A549 (cell line): ENCODE measurements at regions of chr1 and their contacts with region 1.

Region 1: DNA sequence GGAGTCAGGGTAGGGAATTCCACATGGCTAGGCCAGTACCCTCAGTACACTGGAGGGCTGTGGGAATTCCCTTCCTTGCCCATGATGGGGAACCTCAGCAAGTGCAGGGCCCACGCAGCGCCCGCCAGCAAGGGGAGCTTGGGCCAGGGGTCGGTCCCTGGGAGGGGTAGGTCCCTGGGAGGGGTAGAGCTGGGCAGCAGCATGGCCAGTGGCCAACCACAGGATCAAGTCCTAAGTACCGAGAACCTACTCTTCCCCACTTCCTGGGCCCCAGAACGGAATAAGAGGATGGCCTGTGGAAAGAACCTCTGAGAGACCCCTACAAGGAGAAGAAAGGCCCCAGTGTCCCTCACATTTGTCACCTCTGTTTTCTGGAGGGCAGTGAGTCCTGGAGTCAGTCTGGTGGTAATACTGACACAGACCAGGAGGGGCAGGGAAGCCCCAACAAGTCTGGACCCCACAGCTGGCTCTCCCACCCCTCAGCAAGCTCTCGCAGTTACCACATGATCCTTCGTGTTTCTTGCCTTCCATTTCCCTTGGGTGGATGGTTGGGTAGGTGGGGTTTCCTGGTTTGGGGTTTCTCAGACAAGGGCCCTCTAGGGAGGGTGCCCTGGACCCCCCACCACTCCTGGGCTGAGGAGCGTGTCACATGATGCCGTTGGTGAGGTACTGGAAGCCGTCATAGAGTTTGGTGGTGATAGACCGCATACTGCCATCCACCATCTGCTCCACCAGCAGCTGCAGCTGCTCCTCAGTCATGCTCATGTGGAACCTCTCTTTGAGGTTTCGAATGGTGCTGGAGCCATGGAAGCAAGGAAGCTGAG is 10.3 kb downstream of the ZNF687 start:
- DNase-seq: no peak
- ATAC-seq: peak in 1 of 2 experiments; percentile 29; a peak in 3 of 6 replicates
- H3K4me3 ChIP-seq: no peak overlapping the region
- H3K27ac ChIP-seq: no peak overlapping the region
- H3K4me1 ChIP-seq: no peaks in the 10 kb centered on the region
- CTCF ChIP-seq: no peak
- EP300 ChIP-seq: no peak
- POLR2A ChIP-seq: no peak
- RAD21 ChIP-seq: no peak

Region 2: DNA sequence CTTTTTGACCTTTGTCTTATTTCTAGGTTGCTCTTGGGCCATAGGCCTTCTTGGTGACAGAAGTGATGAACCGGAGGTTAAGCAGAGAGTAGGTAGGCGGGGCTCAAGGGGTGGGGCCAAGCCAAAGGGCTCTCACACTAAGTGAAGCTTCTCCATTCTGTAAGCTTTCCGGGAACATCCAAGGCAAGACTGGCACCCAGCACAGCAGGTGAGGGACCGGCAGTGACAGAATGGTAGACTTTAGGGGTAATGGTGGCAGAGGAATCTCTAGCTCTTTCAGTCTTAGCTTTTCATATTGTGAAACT is 136.0 kb before region 1 on chr1 and contains the start of gene TNFAIP8L2:
- CTCF ChIA-PET with region 1: no interaction called
- POLR2A ChIA-PET with region 1: no interaction called
- DNase-seq: no peak
- ATAC-seq: peak; percentile 72 to 82
- H3K4me3 ChIP-seq: no peak within 1 kb of the TSS
- H3K27ac ChIP-seq: no peak within 1 kb of the TSS
- H3K4me1 ChIP-seq: no peaks in the 10 kb centered on the region
- CTCF ChIP-seq: no peak
- EP300 ChIP-seq: no peak
- POLR2A ChIP-seq: no peak
- RAD21 ChIP-seq: no peak
- polyA plus RNA-seq, gene TNFAIP8L2: not detected in 2 replicates

Region 3: DNA sequence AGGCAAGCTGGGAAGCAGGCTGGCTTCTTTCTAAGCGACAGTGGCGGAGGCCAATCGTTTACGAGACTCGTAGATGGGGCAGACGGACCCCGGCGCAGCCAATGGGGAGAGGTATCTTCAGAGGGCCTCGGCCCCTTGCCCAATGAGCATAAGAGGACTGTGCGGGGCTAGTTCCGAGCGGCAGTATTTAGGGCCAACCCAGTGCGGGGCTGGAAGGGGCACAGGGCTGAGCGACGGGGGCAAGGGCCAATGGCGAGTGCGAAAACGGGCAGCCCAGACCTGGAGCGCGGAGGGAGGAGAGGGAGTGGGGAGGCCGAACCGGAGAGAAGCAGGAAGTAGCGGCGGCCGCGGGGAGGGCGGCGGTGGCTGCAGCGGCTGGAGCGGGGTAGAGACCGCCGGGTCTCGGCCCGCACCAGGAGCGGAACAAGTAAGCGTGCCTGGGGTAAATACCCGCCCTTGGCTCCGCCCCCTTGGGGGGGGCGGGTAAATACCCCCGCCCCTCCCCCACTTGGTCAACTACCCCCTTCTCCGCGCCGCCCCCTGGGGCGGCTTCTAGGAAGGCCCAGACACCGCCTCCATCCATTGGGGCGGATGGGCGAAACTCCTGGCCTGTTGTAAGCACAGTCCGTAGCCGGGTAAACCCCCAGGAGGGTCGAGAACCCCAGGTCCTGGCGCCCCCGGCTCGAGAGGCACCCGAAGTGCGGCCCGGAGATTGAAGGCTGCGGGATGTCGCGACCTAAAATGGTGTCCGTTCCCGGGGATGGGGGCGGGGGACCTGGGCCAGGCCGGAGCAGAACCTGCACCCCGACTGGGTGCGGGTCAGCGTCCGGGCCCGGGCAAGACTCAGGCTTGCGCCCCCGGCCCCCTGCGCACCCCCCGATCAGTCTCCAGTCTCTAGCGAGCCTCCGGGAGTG is 10.2 kb before region 1 on chr1 and contains the start of gene ZNF687:
- CTCF ChIA-PET with region 1: interaction called, 13 read pairs
- POLR2A ChIA-PET with region 1: interaction called, 7 read pairs
- DNase-seq: peak; percentile 100
- ATAC-seq: peak; percentile 89 to 96
- H3K4me3 ChIP-seq: peak within 1 kb of the TSS; percentile 75
- H3K27ac ChIP-seq: peak within 1 kb of the TSS; percentile 90 to 92
- H3K4me1 ChIP-seq: peaks cover 13% of the 10 kb centered on the region
- CTCF ChIP-seq: no peak
- EP300 ChIP-seq: no peak
- POLR2A ChIP-seq: peak; percentile 64
- RAD21 ChIP-seq: no peak
- polyA plus RNA-seq, gene ZNF687: 14.0 and 14.3 TPM in 2 replicates

Region 4: DNA sequence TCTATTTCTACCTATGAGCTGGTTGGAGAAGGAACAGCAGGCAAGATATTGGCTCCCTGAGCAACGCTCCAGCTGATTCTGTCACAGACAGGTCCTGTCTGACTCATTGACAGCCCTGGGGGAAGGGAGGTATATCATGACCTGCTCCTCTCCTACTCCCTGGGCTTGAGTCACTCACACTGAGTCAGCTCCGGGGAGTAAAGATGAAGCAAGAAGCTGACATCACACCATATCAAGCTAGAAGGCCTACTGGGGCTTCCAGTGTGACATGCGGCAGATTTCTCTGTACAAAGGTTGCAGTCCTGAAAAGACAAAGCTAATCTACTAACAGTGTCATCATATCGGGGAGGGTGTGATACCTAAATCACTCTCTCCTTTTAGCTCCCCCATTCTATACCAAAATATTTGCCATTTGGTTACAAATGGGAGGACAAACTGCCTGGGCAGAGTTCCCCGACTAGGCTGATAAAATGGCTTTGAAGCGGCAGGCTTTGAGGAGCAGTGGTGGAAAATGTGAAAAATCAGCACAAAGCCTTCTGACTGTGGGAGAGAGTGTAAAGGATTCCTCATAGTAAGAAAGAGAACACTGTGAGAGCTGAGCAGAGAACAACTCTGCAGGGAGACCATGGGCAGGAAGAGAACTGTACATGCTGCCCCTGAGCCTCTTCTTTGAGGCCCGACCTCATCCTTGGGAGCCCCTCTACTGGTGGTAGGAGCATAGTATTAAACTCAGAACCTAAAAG is 19.3 kb after region 1 on chr1:
- CTCF ChIA-PET with region 1: interaction called, 18 read pairs
- POLR2A ChIA-PET with region 1: no interaction called
- DNase-seq: peak; percentile 93 to 99
- ATAC-seq: peak; percentile 99 to 100
- H3K4me3 ChIP-seq: no peak overlapping the region
- H3K27ac ChIP-seq: peak overlapping the region; percentile 64 to 81
- H3K4me1 ChIP-seq: peaks cover 44% of the 10 kb centered on the region
- CTCF ChIP-seq: no peak
- EP300 ChIP-seq: no peak; a peak in 1 of 5 replicates
- POLR2A ChIP-seq: no peak
- RAD21 ChIP-seq: no peak